Activated T-helper 2 cell treated with anti-CD3 and anti-CD28 coated beads, Interferon-gamma antibody, Interleukin-2, Interleukin-4, amounts not matched to agents 10 μg/mL and 5 μg/mL and 100 μg/mL, durations not matched to agents 14 hours and 24 hours and 36 hours (primary cell): ENCODE measurements at regions of chr19 and their contacts with region 1.

Region 1: DNA sequence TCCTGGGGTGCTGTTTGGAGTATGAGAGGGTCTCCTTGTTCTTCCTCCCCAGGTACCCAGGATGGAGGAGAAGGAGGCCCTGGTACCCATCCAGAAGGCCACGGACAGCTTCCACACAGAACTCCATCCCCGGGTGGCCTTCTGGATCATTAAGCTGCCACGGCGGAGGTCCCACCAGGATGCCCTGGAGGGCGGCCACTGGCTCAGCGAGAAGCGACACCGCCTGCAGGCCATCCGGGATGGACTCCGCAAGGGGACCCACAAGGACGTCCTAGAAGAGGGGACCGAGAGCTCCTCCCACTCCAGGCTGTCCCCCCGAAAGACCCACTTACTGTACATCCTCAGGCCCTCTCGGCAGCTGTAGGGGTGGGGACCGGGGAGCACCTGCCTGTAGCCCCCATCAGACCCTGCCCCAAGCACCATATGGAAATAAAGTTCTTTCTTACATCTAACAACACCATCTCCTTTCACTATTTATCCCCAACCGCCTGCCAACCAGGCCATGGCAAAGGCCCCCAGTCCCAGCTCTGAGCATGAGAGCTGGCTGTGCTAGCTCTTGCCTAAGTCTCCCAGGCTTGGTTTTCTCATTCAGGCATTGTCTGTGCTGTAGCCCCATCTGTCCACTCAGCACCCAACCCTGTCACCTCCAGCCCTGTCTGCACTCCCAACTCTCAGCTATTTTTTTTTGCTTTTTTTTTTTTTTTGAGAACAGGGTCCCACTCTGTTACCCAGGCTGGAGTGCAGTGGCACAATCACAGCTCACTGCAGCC is 11.2 kb downstream of the DKKL1 start:
- DNase-seq: no peak
- H3K4me3 Mint-ChIP-seq: no peak overlapping the region
- H3K27ac Mint-ChIP-seq: no peak overlapping the region
- H3K4me1 Mint-ChIP-seq: no peaks in the 10 kb centered on the region
- H3K27me3 Mint-ChIP-seq: peaks cover 4% of the 10 kb centered on the region

Region 2: GRCh38 chr19:49396738-49397505 is 22.1 kb after region 1 on chr19:
- intact Hi-C with region 1: loop called (anchors 1 kb)
- DNase-seq: no peak
- H3K4me3 Mint-ChIP-seq: no peak overlapping the region
- H3K27ac Mint-ChIP-seq: no peak overlapping the region
- H3K4me1 Mint-ChIP-seq: peaks cover 18% of the 10 kb centered on the region
- H3K27me3 Mint-ChIP-seq: peaks cover 10% of the 10 kb centered on the region